AG04450 (cell line): ENCODE measurements at regions of chr10 and their contacts with region 1.

Region 1: GRCh38 chr10:98425511-98426352 is 10.8 kb upstream of the PYROXD2 start:
- DNase-seq: no peak
- H3K4me3 ChIP-seq: no peak overlapping the region
- H3K27ac ChIP-seq: no peak overlapping the region
- H3K27me3 ChIP-seq: no peaks in the 10 kb centered on the region
- CTCF ChIP-seq: peak; percentile 68

Region 2: GRCh38 chr10:98414932-98415730 is 10.6 kb before region 1 on chr10 and contains the start of gene PYROXD2:
- CTCF ChIA-PET with region 1: interaction called, 15 read pairs
- POLR2A ChIA-PET with region 1: interaction called, 4 read pairs
- DNase-seq: peak; percentile 81
- H3K4me3 ChIP-seq: peak within 1 kb of the TSS; percentile 82
- H3K27ac ChIP-seq: peak within 1 kb of the TSS; percentile 39
- H3K27me3 ChIP-seq: no peaks in the 10 kb centered on the region
- CTCF ChIP-seq: no peak
- polyA plus RNA-seq, gene PYROXD2: 20.3 and 25.6 TPM in 2 replicates

Region 3: DNA sequence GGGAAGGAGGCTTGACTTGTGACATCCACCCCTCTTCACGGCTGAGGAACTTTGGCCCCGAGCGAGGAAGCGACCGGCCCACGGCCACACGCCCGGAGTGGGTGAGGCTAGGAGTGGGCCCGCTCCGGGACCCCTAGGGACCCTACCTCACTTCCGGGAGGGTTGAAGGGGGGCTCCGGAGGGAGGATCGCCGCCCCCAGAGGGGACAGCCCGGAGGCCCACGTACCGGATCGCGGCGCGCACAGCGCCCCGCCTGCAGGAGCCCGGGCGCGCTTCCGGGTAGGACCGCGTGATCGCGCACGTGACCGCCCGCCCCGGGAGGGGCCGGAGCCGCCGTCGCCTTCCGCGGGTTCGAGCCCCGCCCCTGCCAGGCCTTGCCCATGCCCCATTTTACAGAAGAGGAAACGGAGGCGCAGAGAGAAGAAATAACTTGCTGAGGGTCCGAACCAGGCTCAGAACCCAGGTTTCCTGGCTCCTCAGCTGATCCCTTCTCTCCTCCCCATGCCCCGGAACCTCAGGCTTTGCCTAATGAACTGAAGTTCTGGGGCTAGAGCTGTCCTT is 21.0 kb after region 1 on chr10 and contains the start of gene HPS1:
- CTCF ChIA-PET with region 1: interaction called, 18 read pairs
- POLR2A ChIA-PET with region 1: interaction called, 3 read pairs
- DNase-seq: no peak
- H3K4me3 ChIP-seq: peak within 1 kb of the TSS; percentile 84
- H3K27ac ChIP-seq: peak within 1 kb of the TSS; percentile 61
- H3K27me3 ChIP-seq: no peaks in the 10 kb centered on the region
- CTCF ChIP-seq: no peak
- polyA plus RNA-seq, gene HPS1: 56.7 and 66.2 TPM in 2 replicates

Region 4: GRCh38 chr10:98556061-98556460 is 130.3 kb after region 1 on chr10:
- CTCF ChIA-PET with region 1: no interaction called
- POLR2A ChIA-PET with region 1: no interaction called
- DNase-seq: no peak
- H3K4me3 ChIP-seq: no peak overlapping the region
- H3K27ac ChIP-seq: no peak overlapping the region
- H3K27me3 ChIP-seq: peaks cover 2% of the 10 kb centered on the region
- CTCF ChIP-seq: no peak